ENCODE measurements at regions of chr6 and their contacts with region 1.

Region 1: GRCh38 chr6:73675466-73676098 is 20.4 kb upstream of the CD109 start:
- DNase-seq: peak; percentile 67
- ATAC-seq: peak; percentile 95
- H3K4me3 ChIP-seq: no peak overlapping the region
- H3K27ac ChIP-seq: no peak overlapping the region
- H3K4me1 ChIP-seq: peaks cover 16 to 28% of the 10 kb centered on the region in 2 experiments
- H3K27me3 ChIP-seq: no peaks in the 10 kb centered on the region
- CTCF ChIP-seq: peak; percentile 85 to 91 (median 88)
- POLR2A ChIP-seq: no peak
- RAD21 ChIP-seq: peak; percentile 91

Region 2: GRCh38 chr6:73435236-73435635 is 240.3 kb before region 1 on chr6:
- CTCF ChIA-PET with region 1: no interaction called
- POLR2A ChIA-PET with region 1: no interaction called
- RAD21 ChIA-PET with region 1: no interaction called
- intact Hi-C with region 1: no loop called
- DNase-seq: no peak
- ATAC-seq: no peak
- H3K4me3 ChIP-seq: no peak overlapping the region
- H3K27ac ChIP-seq: no peak overlapping the region
- H3K4me1 ChIP-seq: no peaks in the 10 kb centered on the region
- H3K27me3 ChIP-seq: no peaks in the 10 kb centered on the region
- CTCF ChIP-seq: no peak
- POLR2A ChIP-seq: no peak
- RAD21 ChIP-seq: no peak

Region 3: GRCh38 chr6:73732845-73733675 is 57.5 kb after region 1 on chr6:
- CTCF ChIA-PET with region 1: interaction called, 43 read pairs
- POLR2A ChIA-PET with region 1: interaction called, 3 read pairs
- RAD21 ChIA-PET with region 1: interaction called, 7 to 8 read pairs
- intact Hi-C with region 1: loop called (anchors 1 kb)
- DNase-seq: peak; percentile 49
- ATAC-seq: peak; percentile 97
- H3K4me3 ChIP-seq: no peak overlapping the region
- H3K27ac ChIP-seq: no peak overlapping the region
- H3K4me1 ChIP-seq: no peaks in the 10 kb centered on the region
- H3K27me3 ChIP-seq: no peaks in the 10 kb centered on the region
- CTCF ChIP-seq: peak; percentile 82 to 98 (median 97)
- POLR2A ChIP-seq: no peak
- RAD21 ChIP-seq: peak; percentile 88

Measured in HCT116 (cell line).